Caco-2 (cell line): ENCODE measurements at regions of chr5 and their contacts with region 1.

Region 1: GRCh38 chr5:136364307-136364706 is 1.0 kb downstream of the TRPC7 start:
- DNase-seq: no peak
- H3K4me3 ChIP-seq: no peak overlapping the region
- H3K4me3 Mint-ChIP-seq: no peak overlapping the region
- H3K27ac Mint-ChIP-seq: no peak overlapping the region
- H3K4me1 ChIP-seq: no peaks in the 10 kb centered on the region
- H3K4me1 Mint-ChIP-seq: no peaks in the 10 kb centered on the region
- H3K27me3 ChIP-seq: no peaks in the 10 kb centered on the region
- H3K27me3 Mint-ChIP-seq: peaks cover 7% of the 10 kb centered on the region
- CTCF ChIP-seq: peak; percentile 10 to 35

Region 2: GRCh38 chr5:136424835-136425584 is 60.7 kb after region 1 on chr5:
- CTCF ChIA-PET with region 1: no interaction called
- POLR2A ChIA-PET with region 1: no interaction called
- intact Hi-C with region 1: loop called (anchors 2 kb)
- DNase-seq: peak; percentile 83 to 89
- H3K4me3 ChIP-seq: no peak overlapping the region
- H3K4me3 Mint-ChIP-seq: no peak overlapping the region
- H3K27ac Mint-ChIP-seq: no peak overlapping the region
- H3K4me1 ChIP-seq: no peaks in the 10 kb centered on the region
- H3K4me1 Mint-ChIP-seq: no peaks in the 10 kb centered on the region
- H3K27me3 ChIP-seq: no peaks in the 10 kb centered on the region
- H3K27me3 Mint-ChIP-seq: peaks cover 24% of the 10 kb centered on the region
- CTCF ChIP-seq: peak; percentile 84 to 93